Aorta (tissue), 5 donors: ENCODE measurements at regions of chr7 and their contacts with region 1.

Region 1: DNA sequence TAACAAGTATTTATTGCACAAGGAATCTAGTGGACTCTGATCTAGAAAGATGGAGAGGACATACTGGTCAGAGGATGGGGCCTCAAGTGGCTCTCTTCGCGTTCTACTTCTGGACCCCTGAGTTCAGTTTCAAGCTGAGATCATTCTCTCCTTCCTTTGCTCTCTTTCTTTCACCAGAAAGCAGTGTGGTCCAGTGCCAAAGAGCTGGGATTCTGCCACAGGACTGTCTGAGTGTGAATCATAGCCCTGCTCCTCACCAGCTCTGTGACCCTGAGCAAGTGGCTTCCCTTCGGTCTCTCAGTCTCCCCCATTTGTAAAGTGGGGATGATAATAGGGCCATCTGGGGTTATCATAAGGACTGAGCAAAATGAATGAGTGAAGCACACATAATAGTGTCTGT is 715.2 kb downstream of the SUGCT start:
- DNase-seq: peak in 1 of 2 donors; percentile 62
- ATAC-seq: peak; percentile 44
- H3K4me3 ChIP-seq: no peak overlapping the region
- H3K27ac ChIP-seq: no peak overlapping the region
- H3K4me1 ChIP-seq: peaks cover 6 to 8% of the 10 kb centered on the region in 2 donors
- H3K27me3 ChIP-seq: no peaks in the 10 kb centered on the region

Region 2: DNA sequence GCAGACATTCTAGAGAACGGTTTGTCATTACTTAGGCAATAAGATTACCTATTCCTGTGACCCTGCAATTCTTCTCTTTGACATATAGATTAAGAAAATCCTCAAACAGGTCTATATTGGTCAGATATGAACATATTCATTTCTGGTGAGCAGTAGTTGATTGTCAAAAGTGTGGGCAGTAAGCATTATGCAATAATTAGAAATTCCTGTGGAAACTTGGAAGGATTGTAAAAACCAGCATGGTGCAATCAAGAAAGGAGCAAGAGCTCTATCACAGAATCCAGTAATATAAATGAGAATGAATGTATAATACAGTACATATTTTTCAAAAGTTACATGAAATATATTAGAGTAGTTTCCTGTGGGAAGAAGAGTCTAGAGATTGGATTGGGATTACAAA is 308.7 kb before region 1 on chr7:
- intact Hi-C with region 1: no loop called
- DNase-seq: no peak
- ATAC-seq: no peak
- H3K4me3 ChIP-seq: no peak overlapping the region
- H3K27ac ChIP-seq: no peak overlapping the region
- H3K4me1 ChIP-seq: peaks cover 1 to 7% of the 10 kb centered on the region in 2 donors
- H3K27me3 ChIP-seq: no peaks in the 10 kb centered on the region

Region 3: GRCh38 chr7:40899151-40899550 is 49.1 kb after region 1 on chr7:
- intact Hi-C with region 1: loop called in 1 of 2 experiments (anchors 2 kb)
- DNase-seq: no peak
- ATAC-seq: no peak
- H3K4me3 ChIP-seq: no peak overlapping the region
- H3K27ac ChIP-seq: no peak overlapping the region
- H3K4me1 ChIP-seq: no peaks in the 10 kb centered on the region
- H3K27me3 ChIP-seq: no peaks in the 10 kb centered on the region